CD4-positive, alpha-beta memory T cell (primary cell): ENCODE measurements at regions of chr10 and their contacts with region 1.

Region 1: DNA sequence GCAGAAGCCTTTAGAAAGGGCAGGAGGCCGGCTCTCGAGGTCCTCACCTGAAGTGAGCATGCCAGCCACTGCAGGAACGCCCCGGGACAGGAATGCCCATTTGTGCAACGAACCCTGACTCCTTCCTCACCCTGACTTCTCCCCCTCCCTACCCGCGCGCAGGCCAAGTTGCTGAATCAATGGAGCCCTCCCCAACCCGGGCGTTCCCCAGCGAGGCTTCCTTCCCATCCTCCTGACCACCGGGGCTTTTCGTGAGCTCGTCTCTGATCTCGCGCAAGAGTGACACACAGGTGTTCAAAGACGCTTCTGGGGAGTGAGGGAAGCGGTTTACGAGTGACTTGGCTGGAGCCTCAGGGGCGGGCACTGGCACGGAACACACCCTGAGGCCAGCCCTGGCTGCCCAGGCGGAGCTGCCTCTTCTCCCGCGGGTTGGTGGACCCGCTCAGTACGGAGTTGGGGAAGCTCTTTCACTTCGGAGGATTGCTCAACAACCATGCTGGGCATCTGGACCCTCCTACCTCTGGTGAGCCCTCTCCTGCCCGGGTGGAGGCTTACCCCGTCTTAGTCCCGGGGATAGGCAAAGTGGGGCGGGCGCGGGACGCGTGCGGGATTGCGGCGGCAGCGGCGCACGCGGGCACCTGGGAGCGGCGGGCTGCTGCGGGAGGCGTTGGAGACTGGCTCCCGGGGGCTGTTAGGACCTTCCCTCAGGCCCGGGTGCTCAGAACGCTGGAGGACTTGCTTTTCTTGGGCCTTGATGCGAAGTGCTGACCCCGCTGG is at the start of gene FAS:
- DNase-seq: peak; percentile 80 to 95 (median 83)
- H3K4me3 ChIP-seq: peak within 1 kb of the TSS; percentile 68 to 81
- H3K4me3 Mint-ChIP-seq: peak within 1 kb of the TSS; percentile 95 to 100 (median 99)
- H3K27ac ChIP-seq: peak within 1 kb of the TSS; percentile 93
- H3K27ac Mint-ChIP-seq: peak within 1 kb of the TSS; percentile 96 to 100 (median 97)
- H3K4me1 ChIP-seq: peaks cover 71% of the 10 kb centered on the region
- H3K4me1 Mint-ChIP-seq: peaks cover 53 to 82% (median 63%) of the 10 kb centered on the region in 4 donors
- H3K27me3 ChIP-seq: no peaks in the 10 kb centered on the region
- H3K27me3 Mint-ChIP-seq: no peaks in the 10 kb centered on the region
- total RNA-seq, gene FAS: 42.4 to 44.2 TPM

Region 2: DNA sequence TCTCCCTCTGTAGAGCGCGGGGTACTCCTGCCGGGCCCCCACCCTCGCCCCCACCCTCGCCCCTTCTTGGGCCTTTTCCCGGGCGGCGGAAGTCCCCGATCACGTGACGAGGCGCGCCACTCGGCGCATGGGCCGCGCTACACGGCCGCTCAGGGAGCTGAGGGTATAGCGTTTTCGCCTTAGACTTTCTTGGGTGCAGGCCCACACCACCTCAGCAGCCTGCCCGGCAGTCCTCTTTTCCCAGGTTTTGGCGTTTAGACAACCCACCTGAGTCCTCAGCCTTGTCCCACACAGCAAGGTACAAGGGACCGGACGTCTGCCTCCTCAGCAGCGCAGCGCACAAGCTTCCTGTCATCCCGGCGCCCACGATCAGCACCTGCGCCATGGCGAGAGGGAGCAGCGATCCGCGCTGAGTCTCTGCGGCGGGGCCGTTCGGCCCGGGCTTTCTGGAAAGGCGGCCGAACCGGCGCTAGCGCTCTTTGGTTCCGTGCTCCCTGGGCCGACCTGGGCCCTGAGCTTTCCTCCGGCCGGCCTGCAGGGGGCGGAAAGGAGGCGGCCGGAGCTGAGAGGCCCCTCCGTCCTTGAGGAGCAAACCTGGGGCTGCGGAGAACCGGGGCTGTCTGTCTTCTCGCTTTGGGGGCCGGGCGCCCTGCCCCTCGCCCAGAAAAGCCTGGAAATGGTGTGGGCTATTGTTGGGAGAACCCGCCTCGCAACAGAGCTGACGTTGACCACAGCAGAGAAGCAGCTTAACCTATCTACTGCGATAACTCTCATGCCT is 407.6 kb before region 1 on chr10 and contains the start of gene RNLS:
- CTCF ChIA-PET with region 1: no interaction called
- POLR2A ChIA-PET with region 1: no interaction called
- intact Hi-C with region 1: loop called (anchors 5 kb)
- DNase-seq: peak; percentile 60 to 73 (median 65)
- H3K4me3 ChIP-seq: peak within 1 kb of the TSS; percentile 72 to 89
- H3K4me3 Mint-ChIP-seq: peak within 1 kb of the TSS; percentile 91 to 96 (median 93)
- H3K27ac ChIP-seq: peak within 1 kb of the TSS; percentile 77
- H3K27ac Mint-ChIP-seq: peak within 1 kb of the TSS; percentile 78 to 96 (median 93)
- H3K4me1 ChIP-seq: peaks cover 7% of the 10 kb centered on the region
- H3K4me1 Mint-ChIP-seq: peaks cover 6 to 26% (median 14%) of the 10 kb centered on the region in 4 donors
- H3K27me3 ChIP-seq: no peaks in the 10 kb centered on the region
- H3K27me3 Mint-ChIP-seq: no peaks in the 10 kb centered on the region
- total RNA-seq, gene RNLS: 1.7 to 1.9 TPM

Region 3: DNA sequence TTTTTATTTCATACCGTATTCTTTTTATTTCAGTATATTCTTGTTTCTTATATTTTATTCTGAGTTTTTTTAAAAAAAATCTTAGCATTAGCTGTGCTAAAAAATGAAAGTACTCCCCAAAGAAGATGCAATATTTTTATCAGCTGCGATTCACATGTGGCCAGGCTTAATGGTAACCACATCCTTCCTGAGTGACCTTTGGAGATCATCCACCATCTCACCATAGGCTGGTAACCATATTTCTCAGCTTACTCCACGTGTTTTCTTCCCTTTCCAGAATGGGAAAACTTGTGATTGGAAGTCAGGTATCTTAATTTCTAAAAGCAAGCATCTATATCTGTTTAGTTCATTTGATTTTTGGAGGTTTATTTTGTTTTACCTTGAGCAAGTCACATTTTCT is 206.8 kb before region 1 on chr10:
- CTCF ChIA-PET with region 1: no interaction called
- POLR2A ChIA-PET with region 1: no interaction called
- intact Hi-C with region 1: no loop called
- DNase-seq: no peak
- H3K4me3 ChIP-seq: no peak overlapping the region
- H3K4me3 Mint-ChIP-seq: no peak overlapping the region
- H3K27ac ChIP-seq: no peak overlapping the region
- H3K27ac Mint-ChIP-seq: no peak overlapping the region
- H3K4me1 ChIP-seq: no peaks in the 10 kb centered on the region
- H3K4me1 Mint-ChIP-seq: peaks cover 0 to 2% (median 0%) of the 10 kb centered on the region in 4 donors
- H3K27me3 ChIP-seq: no peaks in the 10 kb centered on the region
- H3K27me3 Mint-ChIP-seq: peaks cover 1 to 3% of the 10 kb centered on the region in 2 donors

Region 4: DNA sequence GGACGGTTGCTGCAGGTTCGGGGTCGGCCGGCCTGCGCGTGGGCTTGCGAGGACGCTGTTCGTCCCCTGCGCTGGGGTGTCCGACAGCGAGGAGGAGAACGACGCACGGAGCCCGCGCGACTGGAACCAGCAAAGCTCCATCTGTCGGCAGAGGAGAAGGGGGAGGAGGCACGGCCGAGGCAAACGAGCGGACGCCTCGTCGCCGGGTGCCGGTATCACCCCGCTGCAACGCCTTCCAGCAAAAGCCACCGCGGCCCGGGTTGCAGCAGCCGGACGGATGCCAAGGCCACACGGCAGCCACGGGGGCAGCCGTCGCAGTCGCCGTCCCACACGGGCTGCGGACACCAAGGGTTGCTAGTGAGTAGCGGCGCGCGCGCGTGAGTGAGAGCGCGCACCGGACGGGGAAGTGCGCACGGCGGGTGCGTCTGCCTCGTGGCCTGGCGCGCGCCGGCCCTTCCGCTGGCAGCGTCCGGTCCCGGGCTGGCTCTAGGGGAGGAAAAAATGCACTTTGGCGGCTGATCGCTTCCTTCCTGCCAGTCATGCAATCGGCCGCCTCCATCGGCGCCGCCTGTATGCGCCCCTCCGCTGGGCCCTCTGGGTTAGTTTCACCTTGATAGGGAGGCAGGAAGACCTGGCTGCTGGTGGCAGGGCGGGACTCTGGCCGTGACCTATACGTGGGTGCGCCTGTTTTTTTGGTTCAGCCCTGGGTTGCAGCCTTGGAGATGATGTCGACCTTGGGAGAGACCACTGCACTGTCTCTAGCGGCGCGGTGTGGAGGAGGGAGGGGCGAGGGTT is 110.1 kb before region 1 on chr10:
- CTCF ChIA-PET with region 1: interaction called, 3 read pairs
- POLR2A ChIA-PET with region 1: interaction called, 40 read pairs
- intact Hi-C with region 1: loop called (anchors 5 kb)
- DNase-seq: peak; percentile 74 to 81 (median 78)
- H3K4me3 ChIP-seq: peak overlapping the region; percentile 70 to 71
- H3K4me3 Mint-ChIP-seq: peak overlapping the region; percentile 98 to 99 (median 99)
- H3K27ac ChIP-seq: peak overlapping the region; percentile 70
- H3K27ac Mint-ChIP-seq: peak overlapping the region; percentile 91 to 98 (median 96)
- H3K4me1 ChIP-seq: peaks cover 61% of the 10 kb centered on the region
- H3K4me1 Mint-ChIP-seq: peaks cover 48 to 78% (median 57%) of the 10 kb centered on the region in 4 donors
- H3K27me3 ChIP-seq: no peaks in the 10 kb centered on the region
- H3K27me3 Mint-ChIP-seq: no peaks in the 10 kb centered on the region

Region 5: DNA sequence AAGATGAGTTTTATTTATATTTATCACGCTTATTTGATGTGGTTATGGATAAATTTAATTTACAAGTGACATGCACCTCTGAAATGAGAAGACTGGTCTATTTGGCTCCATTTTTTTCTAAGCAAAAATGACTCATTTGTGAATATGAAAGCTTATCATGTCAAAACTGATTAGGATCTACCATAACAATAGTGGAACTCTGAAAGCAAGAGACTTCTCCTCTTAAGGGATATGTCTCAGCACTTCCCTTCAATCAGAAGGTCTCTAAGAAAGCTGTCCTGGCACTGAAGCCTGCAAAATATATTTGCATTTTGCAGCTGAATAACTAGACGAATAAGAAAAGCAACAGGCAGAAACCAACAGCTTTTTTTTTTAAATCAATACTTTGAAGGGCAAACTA is 12.8 kb after region 1 on chr10:
- CTCF ChIA-PET with region 1: interaction called, 32 read pairs
- POLR2A ChIA-PET with region 1: interaction called, 114 read pairs
- intact Hi-C with region 1: loop called (anchors 1 kb)
- DNase-seq: no peak
- H3K4me3 ChIP-seq: no peak overlapping the region
- H3K4me3 Mint-ChIP-seq: peak overlapping the region in 2 of 8 donors; percentile 88 to 89
- H3K27ac ChIP-seq: peak overlapping the region; percentile 74
- H3K27ac Mint-ChIP-seq: peak overlapping the region in 6 of 7 donors; percentile 81 to 98 (median 89)
- H3K4me1 ChIP-seq: peaks cover 83% of the 10 kb centered on the region
- H3K4me1 Mint-ChIP-seq: peaks cover 47 to 82% (median 64%) of the 10 kb centered on the region in 4 donors
- H3K27me3 ChIP-seq: no peaks in the 10 kb centered on the region
- H3K27me3 Mint-ChIP-seq: no peaks in the 10 kb centered on the region

Region 6: GRCh38 chr10:89207181-89207800 is 216.7 kb after region 1 on chr10 and contains the start of gene CH25H:
- CTCF ChIA-PET with region 1: interaction called, 7 read pairs
- POLR2A ChIA-PET with region 1: interaction called, 14 read pairs
- intact Hi-C with region 1: no loop called
- DNase-seq: peak; percentile 31 to 59 (median 41)
- H3K4me3 ChIP-seq: peak within 1 kb of the TSS; percentile 43 to 55
- H3K4me3 Mint-ChIP-seq: peak within 1 kb of the TSS; percentile 84 to 95 (median 87)
- H3K27ac ChIP-seq: no peak within 1 kb of the TSS
- H3K27ac Mint-ChIP-seq: peak within 1 kb of the TSS; percentile 6 to 83 (median 71)
- H3K4me1 ChIP-seq: peaks cover 17% of the 10 kb centered on the region
- H3K4me1 Mint-ChIP-seq: peaks cover 9 to 15% (median 13%) of the 10 kb centered on the region in 4 donors
- H3K27me3 ChIP-seq: peaks cover 6% of the 10 kb centered on the region
- H3K27me3 Mint-ChIP-seq: peaks cover 18 to 23% of the 10 kb centered on the region in 2 donors
- total RNA-seq, gene CH25H: not detected

Region 7: DNA sequence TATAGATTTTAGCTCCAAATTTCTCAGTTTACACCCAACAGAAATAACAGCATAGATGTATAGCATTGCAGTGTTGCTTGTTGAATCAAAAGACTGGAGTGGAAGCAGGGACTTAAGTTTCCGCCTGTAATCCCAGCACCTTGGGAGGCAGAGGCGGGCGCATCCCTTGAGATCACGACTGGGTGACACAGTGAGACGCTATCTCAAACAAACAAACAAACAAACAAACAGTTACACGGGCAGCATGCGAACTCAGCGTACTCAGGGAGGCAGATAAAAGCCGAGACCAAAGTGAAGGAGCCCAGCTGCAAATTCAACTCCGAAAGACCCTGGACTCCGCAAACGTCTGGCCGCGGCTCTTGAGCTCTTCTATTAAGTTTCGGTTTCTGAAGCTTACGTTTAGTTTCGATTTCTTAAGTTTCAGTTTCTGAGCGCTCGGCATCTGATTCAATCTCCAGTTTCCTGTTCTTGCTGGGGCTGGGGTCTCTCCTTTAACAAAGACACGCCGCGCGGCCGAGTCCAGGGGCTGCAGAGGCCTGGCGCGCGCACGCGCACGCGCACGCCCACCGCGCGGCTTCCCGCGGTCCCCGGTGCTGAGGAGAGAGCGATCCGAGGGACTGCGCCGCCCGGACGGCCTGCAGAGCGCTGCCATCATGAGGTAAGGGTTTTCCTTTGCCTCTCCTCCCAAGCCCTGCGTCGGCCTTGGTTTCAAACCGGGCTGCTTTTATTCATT is 423.7 kb after region 1 on chr10 and contains the start of gene IFIT5:
- CTCF ChIA-PET with region 1: no interaction called
- POLR2A ChIA-PET with region 1: interaction called, 5 read pairs
- intact Hi-C with region 1: loop called (anchors 10 kb)
- DNase-seq: peak; percentile 78 to 83 (median 81)
- H3K4me3 ChIP-seq: peak within 1 kb of the TSS; percentile 94
- H3K4me3 Mint-ChIP-seq: peak within 1 kb of the TSS; percentile 93 to 96 (median 94)
- H3K27ac ChIP-seq: peak within 1 kb of the TSS; percentile 91
- H3K27ac Mint-ChIP-seq: peak within 1 kb of the TSS; percentile 98 to 99 (median 98)
- H3K4me1 ChIP-seq: peaks cover 58% of the 10 kb centered on the region
- H3K4me1 Mint-ChIP-seq: peaks cover 43 to 81% (median 55%) of the 10 kb centered on the region in 4 donors
- H3K27me3 ChIP-seq: no peaks in the 10 kb centered on the region
- H3K27me3 Mint-ChIP-seq: no peaks in the 10 kb centered on the region
- total RNA-seq, gene IFIT5: 24.6 to 25.6 TPM